ENCODE measurements at regions of chr1 and their contacts with region 1.

Region 1: GRCh38 chr1:28877132-28877781 is 37.1 kb upstream of the EPB41 start:
- DNase-seq: no peak
- H3K4me3 ChIP-seq: no peak overlapping the region
- CTCF ChIP-seq: peak; percentile 82

Region 2: DNA sequence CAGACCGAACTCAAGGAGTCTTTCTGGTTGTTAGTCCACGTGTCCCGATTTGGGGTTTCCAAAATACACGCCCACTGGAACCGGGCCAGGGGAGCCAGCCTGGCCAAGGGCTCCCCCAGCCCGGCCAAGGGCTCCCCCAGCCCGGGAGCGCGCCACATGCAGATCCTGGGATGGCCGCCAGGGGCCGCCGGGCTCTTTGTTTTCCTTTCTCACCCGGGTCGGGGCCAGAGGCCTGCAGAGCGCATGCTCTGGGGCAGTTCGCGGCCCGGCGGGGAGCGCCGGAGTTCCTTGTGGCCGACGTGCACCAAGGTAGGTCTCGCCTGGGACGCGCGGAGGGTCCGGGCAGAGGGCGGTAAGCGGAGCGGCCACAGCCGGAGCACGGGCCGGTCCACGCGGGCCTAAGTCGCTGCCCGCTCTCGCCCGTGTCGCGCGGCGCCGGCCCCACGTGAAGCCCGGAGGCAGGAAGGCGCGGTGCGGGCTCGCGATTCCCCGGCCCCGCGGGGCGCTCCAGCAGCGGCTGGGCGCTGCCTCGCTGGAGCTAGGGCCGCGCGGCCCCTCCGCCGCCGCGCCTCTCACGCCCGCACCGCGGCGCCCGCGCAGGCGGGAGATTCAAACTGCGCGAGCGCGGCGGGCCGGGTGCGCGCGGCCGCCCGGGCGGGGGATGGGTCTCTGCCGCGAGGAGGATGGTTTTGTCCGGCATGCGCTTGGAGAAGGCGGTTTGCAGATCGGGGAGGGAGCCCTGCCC is 359.1 kb before region 1 on chr1:
- CTCF ChIA-PET with region 1: interaction called, 15 read pairs
- POLR2A ChIA-PET with region 1: no interaction called
- DNase-seq: no peak
- H3K4me3 ChIP-seq: peak overlapping the region; percentile 75
- CTCF ChIP-seq: peak; percentile 87

Region 3: GRCh38 chr1:28648474-28649198 is 228.6 kb before region 1 on chr1 and contains the start of gene RNU11:
- CTCF ChIA-PET with region 1: interaction called, 6 read pairs
- POLR2A ChIA-PET with region 1: interaction called, 15 read pairs
- DNase-seq: peak; percentile 95
- H3K4me3 ChIP-seq: peak within 1 kb of the TSS; percentile 57
- CTCF ChIP-seq: no peak

Region 4: DNA sequence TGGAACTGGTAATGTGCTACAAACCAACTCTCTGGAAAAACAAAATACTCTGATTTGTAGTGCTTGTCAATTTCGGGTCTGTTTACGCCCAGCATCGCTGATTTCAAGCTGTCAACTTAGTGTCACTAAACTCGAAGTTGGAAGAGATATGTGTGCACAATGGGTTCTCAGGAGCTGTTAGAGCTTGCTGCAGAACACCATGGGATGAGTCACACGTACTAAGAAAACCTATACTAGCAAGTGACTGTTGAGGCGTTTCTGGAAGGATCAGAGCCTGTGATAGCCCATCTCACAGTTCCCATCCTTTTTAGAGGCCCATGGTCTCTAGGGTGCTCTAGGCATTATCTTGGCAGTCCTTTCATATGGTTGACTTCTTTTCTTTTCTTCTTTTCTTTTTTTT is 194.4 kb before region 1 on chr1:
- CTCF ChIA-PET with region 1: no interaction called
- POLR2A ChIA-PET with region 1: no interaction called
- DNase-seq: no peak
- H3K4me3 ChIP-seq: no peak overlapping the region
- CTCF ChIP-seq: no peak

Region 5: GRCh38 chr1:28775121-28775944 is 101.9 kb before region 1 on chr1:
- CTCF ChIA-PET with region 1: interaction called, 471 read pairs
- POLR2A ChIA-PET with region 1: no interaction called
- DNase-seq: no peak
- H3K4me3 ChIP-seq: peak overlapping the region; percentile 16
- CTCF ChIP-seq: no peak

Region 6: DNA sequence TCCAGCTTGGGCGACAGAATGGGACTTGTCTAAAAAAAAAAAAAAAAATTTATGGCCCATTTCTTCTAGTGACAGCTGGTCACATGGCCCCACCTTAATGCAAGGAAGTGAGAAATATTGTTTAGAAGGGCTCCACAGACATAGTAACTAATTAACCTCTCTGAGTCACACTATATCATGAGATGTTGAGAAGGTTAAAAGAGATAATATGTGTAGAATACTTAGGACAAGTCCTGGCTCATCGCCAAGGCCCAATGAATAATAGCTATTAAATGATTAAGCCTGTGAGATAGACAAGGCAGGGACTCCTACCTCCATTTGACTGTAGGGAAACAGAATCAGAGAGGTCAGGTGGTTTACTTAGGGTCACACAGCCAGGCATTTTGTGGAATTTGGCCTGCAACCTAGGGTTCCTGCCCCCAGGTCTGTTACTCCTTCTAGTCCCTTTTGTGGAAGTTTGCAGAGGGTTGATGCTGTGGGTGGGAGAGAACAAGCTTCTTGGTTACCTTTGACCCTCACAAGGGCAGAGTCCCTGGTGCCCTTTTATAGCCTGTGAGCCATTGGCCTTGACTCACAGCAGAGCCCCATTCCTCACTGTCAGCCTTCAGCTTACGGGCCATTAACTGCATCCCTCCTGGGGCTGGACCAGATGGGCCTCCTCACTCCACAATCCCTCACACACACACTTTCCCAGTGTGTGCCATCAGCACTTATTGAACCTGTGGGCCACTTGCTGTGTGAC is 16.8 kb before region 1 on chr1:
- CTCF ChIA-PET with region 1: interaction called, 18 read pairs
- POLR2A ChIA-PET with region 1: no interaction called
- DNase-seq: no peak
- H3K4me3 ChIP-seq: no peak overlapping the region
- CTCF ChIP-seq: no peak

Region 7: GRCh38 chr1:28926629-28927265 is 49.5 kb after region 1 on chr1:
- CTCF ChIA-PET with region 1: no interaction called
- POLR2A ChIA-PET with region 1: no interaction called
- DNase-seq: no peak
- H3K4me3 ChIP-seq: no peak overlapping the region
- CTCF ChIP-seq: no peak

Region 8: GRCh38 chr1:28965271-28965870 is 88.1 kb after region 1 on chr1:
- CTCF ChIA-PET with region 1: no interaction called
- POLR2A ChIA-PET with region 1: no interaction called
- DNase-seq: no peak
- H3K4me3 ChIP-seq: no peak overlapping the region
- CTCF ChIP-seq: no peak